T-cell (primary cell): ENCODE measurements at regions of chr11 and their contacts with region 1.

Region 1: GRCh38 chr11:72985645-72986044 is 156.5 kb downstream of the FCHSD2 start:
- DNase-seq: no peak
- ATAC-seq: no peak
- H3K4me3 ChIP-seq: no peak overlapping the region
- H3K4me3 Mint-ChIP-seq: no peak overlapping the region
- H3K27ac ChIP-seq: no peak overlapping the region
- H3K27ac Mint-ChIP-seq: no peak overlapping the region
- H3K4me1 ChIP-seq: no peaks in the 10 kb centered on the region
- H3K4me1 Mint-ChIP-seq: peaks cover 2 to 11% (median 6%) of the 10 kb centered on the region in 3 donors
- H3K27me3 ChIP-seq: no peaks in the 10 kb centered on the region
- H3K27me3 Mint-ChIP-seq: no peaks in the 10 kb centered on the region

Region 2: GRCh38 chr11:72908032-72908676 is 77.5 kb before region 1 on chr11:
- CTCF ChIA-PET with region 1: no interaction called
- POLR2A ChIA-PET with region 1: interaction called in 1 of 2 experiments, 11 read pairs
- DNase-seq: no peak
- ATAC-seq: no peak
- H3K4me3 ChIP-seq: no peak overlapping the region
- H3K4me3 Mint-ChIP-seq: no peak overlapping the region
- H3K27ac ChIP-seq: no peak overlapping the region
- H3K27ac Mint-ChIP-seq: no peak overlapping the region
- H3K4me1 ChIP-seq: no peaks in the 10 kb centered on the region
- H3K4me1 Mint-ChIP-seq: no peaks in the 10 kb centered on the region
- H3K27me3 ChIP-seq: no peaks in the 10 kb centered on the region
- H3K27me3 Mint-ChIP-seq: no peaks in the 10 kb centered on the region

Region 3: DNA sequence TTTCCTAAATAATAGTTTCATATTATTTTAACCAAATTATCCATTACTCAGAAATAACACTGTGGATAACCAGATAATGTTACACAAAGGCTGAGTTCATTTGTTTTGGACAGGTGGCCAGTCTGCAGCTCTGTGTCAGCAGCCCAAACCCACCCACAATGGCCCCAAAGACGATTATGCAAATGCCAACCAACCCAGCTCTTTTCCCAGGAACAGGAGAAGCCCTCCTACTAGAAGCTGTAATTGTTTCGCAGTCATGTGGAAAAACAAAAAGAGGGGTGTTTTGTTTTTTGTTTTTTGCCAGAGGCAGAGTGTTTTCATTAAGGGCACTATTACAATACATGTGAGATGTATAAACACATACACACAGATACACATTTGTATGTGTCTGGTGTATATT is 54.4 kb after region 1 on chr11:
- CTCF ChIA-PET with region 1: no interaction called
- POLR2A ChIA-PET with region 1: no interaction called
- DNase-seq: no peak
- ATAC-seq: no peak
- H3K4me3 ChIP-seq: no peak overlapping the region
- H3K4me3 Mint-ChIP-seq: no peak overlapping the region
- H3K27ac ChIP-seq: no peak overlapping the region
- H3K27ac Mint-ChIP-seq: no peak overlapping the region
- H3K4me1 ChIP-seq: peaks cover 2 to 4% of the 10 kb centered on the region in 2 experiments
- H3K4me1 Mint-ChIP-seq: peaks cover 10 to 29% (median 19%) of the 10 kb centered on the region in 3 donors
- H3K27me3 ChIP-seq: no peaks in the 10 kb centered on the region
- H3K27me3 Mint-ChIP-seq: no peaks in the 10 kb centered on the region